ENCODE measurements at regions of chr9 and their contacts with region 1.

Region 1: DNA sequence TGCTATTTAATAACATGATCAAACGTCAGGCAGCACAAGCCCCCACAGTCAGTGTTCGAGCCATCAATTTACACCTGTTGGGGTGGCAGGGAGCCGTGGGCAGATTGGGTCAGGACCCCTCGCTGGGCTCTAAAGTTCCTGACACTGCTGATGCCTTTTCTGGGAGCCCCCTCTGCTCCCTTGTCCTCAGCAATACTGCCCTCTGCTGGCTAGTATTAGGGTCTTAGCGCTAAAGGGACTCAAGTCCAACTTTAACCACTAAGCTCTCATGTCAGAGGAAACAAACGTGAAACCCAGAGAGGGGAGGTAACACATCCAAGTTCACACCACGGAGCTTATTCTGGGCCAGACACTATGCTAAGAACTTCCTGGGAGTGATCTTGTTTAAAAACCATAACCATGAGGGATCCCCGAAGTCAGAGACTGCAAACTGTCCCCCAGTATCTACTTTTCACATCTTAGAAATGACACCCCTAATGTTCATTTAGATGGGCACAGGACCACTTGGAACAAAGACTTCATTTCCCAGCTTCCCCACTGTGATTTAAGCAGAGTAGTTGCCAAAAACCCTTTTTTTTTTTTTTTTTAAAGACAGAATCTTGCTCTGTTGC is 20.4 kb downstream of the ANKS6 start:
- DNase-seq: peak; percentile 64
- ATAC-seq: peak; percentile 36
- H3K4me3 ChIP-seq: no peak overlapping the region
- H3K27ac ChIP-seq: no peak overlapping the region
- H3K4me1 ChIP-seq: peaks cover 28% of the 10 kb centered on the region
- H3K27me3 ChIP-seq: no peaks in the 10 kb centered on the region
- CTCF ChIP-seq: peak; percentile 80

Region 2: GRCh38 chr9:98707166-98708102 is 68.5 kb before region 1 on chr9:
- CTCF ChIA-PET with region 1: no interaction called
- POLR2A ChIA-PET with region 1: no interaction called
- intact Hi-C with region 1: no loop called
- DNase-seq: peak; percentile 61
- ATAC-seq: peak; percentile 85
- H3K4me3 ChIP-seq: peak overlapping the region; percentile 60
- H3K27ac ChIP-seq: no peak overlapping the region
- H3K4me1 ChIP-seq: no peaks in the 10 kb centered on the region
- H3K27me3 ChIP-seq: peaks cover 30% of the 10 kb centered on the region
- CTCF ChIP-seq: peak; percentile 58

Region 3: DNA sequence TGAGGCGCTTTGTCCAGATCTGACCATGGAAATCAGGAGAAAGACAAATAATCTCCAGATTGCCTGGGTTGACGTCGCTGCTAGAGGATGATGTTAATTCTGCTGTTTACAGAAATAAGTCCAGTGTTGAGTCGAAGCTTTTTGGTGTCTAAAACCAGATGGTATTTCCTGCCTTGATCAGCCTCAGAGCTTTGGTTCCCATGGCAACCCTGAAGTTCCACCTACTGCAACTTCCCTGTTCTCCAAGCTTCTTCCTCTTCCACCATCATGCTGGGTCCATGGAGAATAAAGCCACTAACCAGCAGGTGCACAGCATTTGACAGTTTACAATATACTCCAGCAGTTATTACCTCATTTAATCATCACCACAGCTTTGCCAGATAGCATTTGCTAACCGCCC is 49.2 kb before region 1 on chr9:
- CTCF ChIA-PET with region 1: no interaction called
- POLR2A ChIA-PET with region 1: no interaction called
- intact Hi-C with region 1: no loop called
- DNase-seq: no peak
- ATAC-seq: no peak
- H3K4me3 ChIP-seq: no peak overlapping the region
- H3K27ac ChIP-seq: no peak overlapping the region
- H3K4me1 ChIP-seq: no peaks in the 10 kb centered on the region
- H3K27me3 ChIP-seq: 0 out of 2 replicates have a peak, but pooled peaks cover 5% of the 10 kb centered on the region
- CTCF ChIP-seq: no peak

Region 4: GRCh38 chr9:98742325-98743280 is 33.3 kb before region 1 on chr9:
- CTCF ChIA-PET with region 1: no interaction called
- POLR2A ChIA-PET with region 1: interaction called, 5 read pairs
- intact Hi-C with region 1: loop called (anchors 1 kb)
- DNase-seq: peak; percentile 69
- ATAC-seq: peak; percentile 97
- H3K4me3 ChIP-seq: no peak overlapping the region
- H3K27ac ChIP-seq: peak overlapping the region; percentile 52
- H3K4me1 ChIP-seq: peaks cover 23% of the 10 kb centered on the region
- H3K27me3 ChIP-seq: no peaks in the 10 kb centered on the region
- CTCF ChIP-seq: no peak

Region 5: DNA sequence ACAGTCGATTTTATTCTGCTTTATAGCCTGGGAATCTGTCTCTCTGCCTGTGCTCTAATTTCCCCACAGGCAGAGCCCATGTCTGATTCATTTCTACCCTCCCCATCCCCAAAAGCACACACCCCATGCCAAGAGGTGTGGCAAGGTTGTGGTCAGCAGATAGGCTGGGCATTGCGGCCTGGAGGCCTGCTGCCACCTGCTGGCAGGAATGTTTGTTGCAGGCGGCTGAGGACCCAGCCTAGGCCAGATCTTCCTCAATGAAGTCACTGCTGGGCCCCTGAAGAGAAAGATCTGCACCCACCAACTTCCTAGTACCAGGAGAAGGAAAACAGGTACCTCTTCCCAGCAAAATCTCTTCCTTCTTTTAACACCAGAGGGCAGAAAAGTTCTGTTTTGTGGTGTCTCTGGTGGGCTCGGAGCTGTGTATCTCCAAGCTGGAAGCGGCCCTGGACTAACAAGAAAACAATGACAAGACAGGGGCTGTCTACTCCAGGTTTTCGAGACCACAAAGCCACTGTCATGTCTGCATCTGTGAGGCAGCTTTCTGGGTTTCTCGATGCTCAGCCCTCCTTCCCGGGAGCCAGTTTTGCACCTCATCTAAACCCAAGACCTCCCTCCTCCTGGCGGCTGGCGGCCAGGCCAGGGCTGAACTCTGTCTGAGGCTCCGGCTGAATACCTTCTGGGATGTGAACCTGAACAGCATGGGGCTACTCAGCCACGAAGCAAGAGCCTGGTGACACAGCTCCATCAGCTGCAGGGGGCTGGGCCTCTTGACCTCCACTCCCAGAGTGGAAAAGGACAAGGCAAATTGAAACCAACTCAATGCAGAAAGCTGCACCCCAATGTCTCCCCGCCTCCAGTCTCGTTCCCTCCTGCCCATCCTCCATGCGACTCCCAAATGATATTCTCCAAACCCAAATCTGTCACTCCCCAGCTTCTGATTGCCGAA is 15.5 kb after region 1 on chr9:
- CTCF ChIA-PET with region 1: no interaction called
- POLR2A ChIA-PET with region 1: no interaction called
- intact Hi-C with region 1: no loop called
- DNase-seq: peak; percentile 92
- ATAC-seq: peak; percentile 81
- H3K4me3 ChIP-seq: peak overlapping the region; percentile 20; the same call in 1 of the 2 replicates
- H3K27ac ChIP-seq: peak overlapping the region; percentile 69
- H3K4me1 ChIP-seq: peaks cover 31% of the 10 kb centered on the region
- H3K27me3 ChIP-seq: no peaks in the 10 kb centered on the region
- CTCF ChIP-seq: peak; percentile 91